Caco-2 (cell line): ENCODE measurements at regions of chr9 and their contacts with region 1.

Region 1: DNA sequence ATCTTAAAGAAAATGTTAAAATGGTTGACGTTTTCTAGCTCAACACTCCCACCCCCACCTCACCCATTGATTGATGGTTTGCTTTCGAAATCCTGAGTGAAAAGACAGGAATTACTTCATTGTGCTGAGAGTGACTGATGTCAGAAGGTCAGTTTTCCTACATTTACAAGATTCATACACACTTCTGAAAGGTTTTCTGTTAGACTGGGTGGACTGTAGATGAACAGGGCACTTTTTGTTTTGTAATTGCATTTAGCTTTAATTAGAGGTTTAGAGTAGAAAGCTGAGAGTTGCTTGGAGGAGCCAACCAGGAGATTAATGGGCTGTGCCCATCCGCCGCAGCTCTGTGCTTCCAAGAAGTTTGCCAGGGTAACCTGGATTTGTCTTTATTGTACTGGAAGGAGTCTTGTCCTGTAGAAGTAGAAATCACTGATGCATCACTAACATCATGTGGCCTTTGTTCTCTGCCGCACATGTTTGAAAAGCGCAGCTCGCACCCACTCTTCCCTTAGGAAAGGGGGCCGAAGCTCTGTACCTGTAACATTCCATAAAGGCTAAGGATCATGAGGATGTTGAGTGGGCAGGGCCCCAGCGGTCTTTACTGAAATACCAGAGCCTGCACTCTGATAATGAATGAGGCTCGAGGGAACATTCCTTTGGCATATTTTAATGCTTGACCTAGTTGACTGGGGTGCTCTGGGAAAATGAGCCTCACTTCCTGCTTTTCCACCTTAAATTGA is 267.7 kb upstream of the DMRT1 start:
- DNase-seq: peak; percentile 69 to 82
- H3K4me3 ChIP-seq: no peak overlapping the region
- H3K4me3 Mint-ChIP-seq: peak overlapping the region; percentile 48
- H3K27ac Mint-ChIP-seq: peak overlapping the region; percentile 92
- H3K4me1 ChIP-seq: peaks cover 43% of the 10 kb centered on the region
- H3K4me1 Mint-ChIP-seq: peaks cover 12% of the 10 kb centered on the region
- H3K27me3 ChIP-seq: no peaks in the 10 kb centered on the region
- H3K27me3 Mint-ChIP-seq: no peaks in the 10 kb centered on the region
- CTCF ChIP-seq: no peak

Region 2: GRCh38 chr9:522658-523057 is 51.2 kb before region 1 on chr9:
- CTCF ChIA-PET with region 1: no interaction called
- POLR2A ChIA-PET with region 1: no interaction called
- intact Hi-C with region 1: no loop called
- DNase-seq: no peak
- H3K4me3 ChIP-seq: no peak overlapping the region
- H3K4me3 Mint-ChIP-seq: no peak overlapping the region
- H3K27ac Mint-ChIP-seq: no peak overlapping the region
- H3K4me1 ChIP-seq: peaks cover 20% of the 10 kb centered on the region
- H3K4me1 Mint-ChIP-seq: peaks cover 31% of the 10 kb centered on the region
- H3K27me3 ChIP-seq: no peaks in the 10 kb centered on the region
- H3K27me3 Mint-ChIP-seq: no peaks in the 10 kb centered on the region
- CTCF ChIP-seq: no peak

Region 3: GRCh38 chr9:592225-592624 is 18.4 kb after region 1 on chr9:
- CTCF ChIA-PET with region 1: no interaction called
- POLR2A ChIA-PET with region 1: interaction called, 3 read pairs
- intact Hi-C with region 1: loop called (anchors 1 kb)
- DNase-seq: peak; percentile 76 to 86
- H3K4me3 ChIP-seq: no peak overlapping the region
- H3K4me3 Mint-ChIP-seq: peak overlapping the region; percentile 27
- H3K27ac Mint-ChIP-seq: peak overlapping the region; percentile 8
- H3K4me1 ChIP-seq: peaks cover 39% of the 10 kb centered on the region
- H3K4me1 Mint-ChIP-seq: peaks cover 23% of the 10 kb centered on the region
- H3K27me3 ChIP-seq: no peaks in the 10 kb centered on the region
- H3K27me3 Mint-ChIP-seq: no peaks in the 10 kb centered on the region
- CTCF ChIP-seq: no peak

Region 4: GRCh38 chr9:613771-614347 is 40.0 kb after region 1 on chr9:
- CTCF ChIA-PET with region 1: no interaction called
- POLR2A ChIA-PET with region 1: no interaction called
- intact Hi-C with region 1: no loop called
- DNase-seq: peak; percentile 67 to 71
- H3K4me3 ChIP-seq: no peak overlapping the region
- H3K4me3 Mint-ChIP-seq: no peak overlapping the region
- H3K27ac Mint-ChIP-seq: no peak overlapping the region
- H3K4me1 ChIP-seq: peaks cover 40% of the 10 kb centered on the region
- H3K4me1 Mint-ChIP-seq: peaks cover 16% of the 10 kb centered on the region
- H3K27me3 ChIP-seq: no peaks in the 10 kb centered on the region
- H3K27me3 Mint-ChIP-seq: no peaks in the 10 kb centered on the region
- CTCF ChIP-seq: peak; percentile 53 to 65

Region 5: DNA sequence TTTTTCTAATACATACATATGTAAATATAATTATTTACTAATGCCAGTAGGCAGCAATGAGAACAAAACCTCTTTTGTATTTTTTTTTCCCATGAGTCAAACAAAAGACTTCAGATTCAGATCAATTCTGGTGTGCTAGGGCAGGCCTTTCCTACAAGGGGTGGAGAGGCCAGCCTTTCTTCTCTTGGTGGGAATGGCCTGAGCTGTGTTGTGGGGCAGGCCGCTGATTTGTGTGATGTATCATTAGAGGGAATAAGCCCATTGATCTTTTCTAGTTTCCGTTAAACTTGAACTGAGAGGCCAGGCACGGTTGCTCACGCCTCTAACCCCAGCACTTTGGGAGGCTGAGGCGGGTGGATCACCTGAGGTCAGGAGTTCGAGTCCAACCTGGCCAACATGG is 152.2 kb after region 1 on chr9:
- CTCF ChIA-PET with region 1: no interaction called
- POLR2A ChIA-PET with region 1: no interaction called
- intact Hi-C with region 1: no loop called
- DNase-seq: no peak
- H3K4me3 ChIP-seq: no peak overlapping the region
- H3K4me3 Mint-ChIP-seq: no peak overlapping the region
- H3K27ac Mint-ChIP-seq: no peak overlapping the region
- H3K4me1 ChIP-seq: peaks cover 14% of the 10 kb centered on the region
- H3K4me1 Mint-ChIP-seq: no peaks in the 10 kb centered on the region
- H3K27me3 ChIP-seq: no peaks in the 10 kb centered on the region
- H3K27me3 Mint-ChIP-seq: no peaks in the 10 kb centered on the region
- CTCF ChIP-seq: no peak